ENCODE measurements at regions of chr19 and their contacts with region 1.

Region 1: DNA sequence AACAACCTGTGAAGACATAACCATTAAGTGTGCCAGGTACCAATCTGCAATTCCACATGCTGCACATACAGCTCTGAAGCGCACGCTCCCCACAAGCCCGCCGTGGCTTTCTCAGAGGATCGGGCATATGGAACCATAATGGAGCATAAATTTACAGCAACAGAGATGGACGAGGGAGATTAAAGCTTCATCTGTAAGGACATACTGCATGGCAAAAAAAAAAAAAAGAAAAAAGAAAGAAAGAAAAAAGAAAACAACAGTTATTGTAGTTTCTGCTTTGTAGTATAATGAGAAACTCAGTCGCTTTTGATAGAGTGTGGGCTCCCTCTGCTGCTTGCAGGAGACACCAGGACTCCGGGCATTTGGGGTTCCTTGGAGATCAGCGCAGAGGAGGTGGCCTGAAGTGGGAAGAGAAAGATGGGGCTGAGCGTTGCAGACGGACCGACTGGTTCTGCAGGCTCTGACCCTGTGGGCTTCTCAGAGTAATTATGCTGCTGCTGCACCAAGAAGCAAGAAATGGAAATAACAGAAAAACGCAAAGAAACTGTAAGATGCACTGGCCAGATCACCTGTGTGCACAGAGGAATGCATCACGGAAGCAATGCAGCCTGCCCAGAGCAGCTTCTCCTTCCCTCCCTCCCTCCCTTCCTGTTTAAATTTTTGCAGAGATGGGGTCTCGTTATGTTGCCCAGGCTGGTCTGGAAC is 10.8 kb upstream of the PDCD5 start:
- DNase-seq: peak; percentile 52
- CTCF ChIP-seq: peak; percentile 81

Region 2: GRCh38 chr19:32339988-32340874 is 230.0 kb before region 1 on chr19:
- CTCF ChIA-PET with region 1: interaction called, 66 read pairs
- POLR2A ChIA-PET with region 1: interaction called, 3 read pairs
- DNase-seq: peak; percentile 63
- CTCF ChIP-seq: peak; percentile 80

Measured in GM10248 (cell line).